Activated CD4-positive, alpha-beta T cell treated with anti-CD3 and anti-CD28 coated beads, Interleukin-2, amount 10 ng/mL, durations not matched to agents 7 days and 5 days (primary cell): ENCODE measurements at regions of chr20 and their contacts with region 1.

Region 1: GRCh38 chr20:50179507-50180016 is 11.1 kb upstream of the CEBPB start:
- DNase-seq: no peak
- H3K4me3 Mint-ChIP-seq: no peak overlapping the region
- H3K27ac Mint-ChIP-seq: no peak overlapping the region
- H3K4me1 Mint-ChIP-seq: no peaks in the 10 kb centered on the region
- H3K27me3 Mint-ChIP-seq: peaks cover 8% of the 10 kb centered on the region

Region 2: DNA sequence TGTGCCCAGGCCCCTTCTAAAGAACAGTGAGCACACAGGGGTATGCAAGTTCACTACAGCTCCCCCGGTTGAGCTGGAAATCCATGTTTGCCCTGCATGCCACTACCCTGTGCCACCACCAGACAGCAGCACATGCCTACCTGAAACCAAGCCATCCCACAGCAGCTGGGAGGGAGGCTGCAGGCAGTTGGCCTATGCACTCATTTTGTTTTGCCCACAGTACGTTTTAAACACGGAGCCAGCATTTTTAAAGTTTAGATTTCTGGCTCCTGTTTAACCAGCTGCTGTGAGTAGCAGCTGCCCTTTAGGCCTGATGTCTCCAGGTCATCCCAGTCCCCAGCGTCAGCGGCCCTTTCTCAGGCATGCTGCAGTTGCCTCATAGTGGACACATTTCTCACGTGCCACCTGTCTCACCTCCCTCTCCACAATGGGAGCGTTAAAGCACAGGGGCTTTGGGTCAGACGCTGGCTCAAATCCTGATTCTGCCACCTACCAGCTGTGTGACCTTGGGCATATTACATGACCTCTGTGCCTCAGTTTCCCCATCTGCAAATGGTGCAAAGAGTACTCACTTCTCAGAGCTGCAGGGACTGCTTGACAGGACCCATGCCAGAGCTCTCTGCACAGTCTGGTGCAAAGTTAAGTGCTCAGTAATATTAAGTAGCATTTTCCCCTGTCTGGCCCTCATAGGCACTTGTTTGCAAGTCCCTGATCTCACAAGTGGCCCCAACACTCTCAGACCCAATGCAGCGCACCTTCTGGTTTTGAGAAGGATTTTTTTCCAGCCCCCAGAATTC is 58.5 kb before region 1 on chr20:
- CTCF ChIA-PET with region 1: interaction called, 33 read pairs
- POLR2A ChIA-PET with region 1: no interaction called
- DNase-seq: peak; percentile 71
- H3K4me3 Mint-ChIP-seq: no peak overlapping the region
- H3K27ac Mint-ChIP-seq: no peak overlapping the region
- H3K4me1 Mint-ChIP-seq: peaks cover 10% of the 10 kb centered on the region
- H3K27me3 Mint-ChIP-seq: no peaks in the 10 kb centered on the region

Region 3: DNA sequence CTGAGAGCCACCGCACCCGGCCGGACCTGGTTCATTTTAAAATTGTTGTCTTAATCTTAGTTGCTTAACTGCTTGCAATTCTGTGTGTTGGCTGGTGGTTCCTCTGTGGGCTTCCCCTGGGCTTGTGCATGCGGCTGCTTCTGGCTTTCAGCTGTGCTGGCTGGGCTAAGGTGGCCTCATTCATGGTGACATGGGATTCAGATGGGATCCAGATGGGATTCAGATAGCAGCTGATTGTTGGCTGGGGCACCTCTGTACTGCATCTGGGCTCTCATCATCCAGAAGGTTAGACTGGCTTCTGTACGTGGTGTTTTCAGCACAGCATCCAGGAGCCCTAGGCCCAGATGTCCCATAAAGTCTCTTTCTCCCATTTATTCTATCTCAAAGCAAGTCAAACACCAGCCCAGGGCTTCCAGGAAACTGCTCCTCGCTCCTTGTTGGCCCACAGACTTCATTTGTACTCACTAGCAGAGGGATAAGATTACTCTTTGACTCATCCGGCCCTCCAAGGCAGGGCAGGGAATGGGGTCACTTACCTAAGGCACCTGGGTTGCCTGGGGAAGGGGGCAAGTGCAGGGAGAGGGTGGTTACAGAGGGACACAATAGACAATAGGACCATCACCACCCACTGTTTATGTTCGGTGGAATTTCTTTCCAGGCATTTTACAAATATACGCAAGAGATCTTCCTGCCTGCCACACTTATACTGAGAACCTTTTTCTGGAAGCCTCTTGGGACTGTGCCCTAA is 15.8 kb before region 1 on chr20:
- CTCF ChIA-PET with region 1: no interaction called
- POLR2A ChIA-PET with region 1: no interaction called
- DNase-seq: no peak
- H3K4me3 Mint-ChIP-seq: no peak overlapping the region
- H3K27ac Mint-ChIP-seq: no peak overlapping the region
- H3K4me1 Mint-ChIP-seq: peaks cover 11% of the 10 kb centered on the region
- H3K27me3 Mint-ChIP-seq: no peaks in the 10 kb centered on the region

Region 4: DNA sequence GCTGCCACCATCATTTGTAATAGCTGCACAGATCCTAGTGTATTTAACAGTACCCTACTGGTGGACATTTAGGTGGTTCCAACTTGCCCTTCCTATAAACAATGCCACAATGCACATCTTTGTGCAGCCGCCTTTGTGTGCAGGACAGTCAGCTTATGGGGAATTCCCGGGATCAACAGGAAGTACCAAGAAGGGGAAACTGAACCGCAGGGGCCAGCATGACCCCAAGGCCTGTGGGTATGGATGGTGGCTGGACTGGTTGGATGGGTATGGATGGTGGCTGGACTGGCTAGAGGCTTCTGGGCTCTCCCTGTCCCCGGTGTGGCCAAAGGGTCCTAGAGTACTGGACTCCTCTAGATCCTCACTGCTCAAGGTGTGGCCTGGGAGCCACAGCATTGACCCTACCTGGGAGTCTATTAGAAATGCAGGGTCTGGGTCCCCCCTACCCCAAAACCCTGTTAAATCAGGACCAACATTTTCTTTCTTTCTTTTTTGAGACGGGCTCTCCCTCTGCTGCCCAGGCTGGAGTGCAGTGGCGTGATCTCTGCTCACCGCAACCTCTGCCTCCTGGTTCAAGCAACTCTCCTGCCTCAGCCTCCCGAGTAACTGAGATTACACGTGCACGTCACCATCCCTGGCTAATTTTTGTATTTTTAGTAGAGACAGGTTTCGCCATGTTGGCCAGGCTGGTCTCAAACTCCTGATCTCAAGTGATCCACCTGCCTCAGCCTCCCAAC is 58.0 kb after region 1 on chr20:
- CTCF ChIA-PET with region 1: no interaction called
- POLR2A ChIA-PET with region 1: no interaction called
- DNase-seq: no peak
- H3K4me3 Mint-ChIP-seq: no peak overlapping the region
- H3K27ac Mint-ChIP-seq: no peak overlapping the region
- H3K4me1 Mint-ChIP-seq: peaks cover 7% of the 10 kb centered on the region
- H3K27me3 Mint-ChIP-seq: peaks cover 10% of the 10 kb centered on the region

Region 5: DNA sequence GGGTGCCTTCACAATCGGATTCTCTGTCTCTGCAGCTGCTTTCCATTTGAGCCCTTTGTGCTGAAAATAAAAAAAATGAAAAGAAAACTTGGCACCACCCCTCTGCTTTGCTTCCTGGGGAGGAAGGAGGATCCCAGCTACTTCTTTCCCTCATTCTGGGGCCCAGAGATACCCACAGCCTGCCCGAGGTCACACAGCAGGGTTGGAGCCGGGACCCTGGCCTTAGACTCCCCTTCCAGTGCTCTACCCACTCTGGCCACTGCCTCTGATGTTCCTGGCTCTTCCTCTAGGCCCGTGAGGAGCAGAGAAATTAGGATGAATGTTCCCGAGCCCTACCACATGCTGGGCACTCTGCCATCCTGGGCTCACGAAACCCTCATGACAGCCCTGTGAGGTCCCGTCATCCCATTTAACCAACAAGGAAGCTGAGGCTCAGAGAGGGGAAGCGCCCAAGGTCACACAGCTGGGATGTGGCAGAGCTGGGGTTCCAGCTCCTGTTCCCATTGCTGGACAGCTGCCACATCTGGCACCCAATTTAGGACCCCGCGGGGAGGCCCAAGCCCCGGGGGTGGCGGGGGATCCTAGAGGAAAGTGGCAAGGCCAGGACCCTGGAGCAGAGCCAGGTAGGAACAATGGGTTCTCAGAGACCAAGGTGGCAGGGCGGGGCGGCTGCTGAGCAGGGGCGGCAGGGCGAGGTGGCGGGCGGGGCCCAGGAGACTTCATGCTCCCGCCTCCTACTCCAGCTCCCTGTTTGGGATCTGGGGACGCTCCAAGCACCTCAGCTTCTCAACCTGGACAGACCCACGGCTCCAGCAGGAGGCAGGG is 87.7 kb after region 1 on chr20:
- CTCF ChIA-PET with region 1: no interaction called
- POLR2A ChIA-PET with region 1: no interaction called
- DNase-seq: no peak
- H3K4me3 Mint-ChIP-seq: no peak overlapping the region
- H3K27ac Mint-ChIP-seq: peak overlapping the region; percentile 25
- H3K4me1 Mint-ChIP-seq: peaks cover 17% of the 10 kb centered on the region
- H3K27me3 Mint-ChIP-seq: peaks cover 10% of the 10 kb centered on the region

Region 6: DNA sequence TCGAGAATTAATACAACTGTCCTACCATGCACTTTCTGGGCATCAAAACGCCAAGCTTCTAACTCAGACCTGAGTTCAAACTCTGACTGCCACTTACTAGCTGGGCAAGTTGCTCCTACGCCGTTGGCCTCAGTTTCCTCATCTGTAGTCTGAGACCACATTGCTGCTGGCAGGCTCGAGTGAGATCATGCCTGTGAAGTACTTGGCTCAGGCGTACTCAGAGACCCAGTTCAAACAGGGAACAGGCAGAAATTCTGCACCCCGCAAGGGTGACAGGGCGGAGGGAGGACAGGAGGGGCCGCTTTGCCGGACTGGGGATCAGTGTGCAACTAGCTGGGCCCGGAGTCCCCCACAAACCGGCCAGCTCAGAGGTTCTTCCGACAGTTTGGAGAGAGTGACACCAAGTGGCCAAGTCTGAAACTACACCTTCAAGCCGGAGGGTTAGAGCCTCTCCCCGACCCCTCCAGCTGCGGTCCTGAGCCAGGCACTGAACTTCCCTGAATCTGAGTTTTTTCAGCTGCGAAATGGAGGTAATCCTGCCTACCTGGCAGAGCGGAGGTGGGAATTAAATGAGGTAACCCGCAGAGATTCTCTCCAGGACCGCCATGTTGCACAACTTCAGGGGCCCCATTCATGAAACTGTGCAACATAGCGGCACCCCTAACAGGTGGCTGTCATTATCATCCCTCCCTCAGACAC is 284.6 kb after region 1 on chr20:
- CTCF ChIA-PET with region 1: interaction called, 11 read pairs
- POLR2A ChIA-PET with region 1: no interaction called
- DNase-seq: peak; percentile 57
- H3K4me3 Mint-ChIP-seq: no peak overlapping the region
- H3K27ac Mint-ChIP-seq: no peak overlapping the region
- H3K4me1 Mint-ChIP-seq: peaks cover 17% of the 10 kb centered on the region
- H3K27me3 Mint-ChIP-seq: peaks cover 4% of the 10 kb centered on the region